Tibial artery (tissue), 4 donors: ENCODE measurements at regions of chr11 and their contacts with region 1.

Region 1: GRCh38 chr11:76656571-76657081 is 13.9 kb downstream of the LRRC32 start:
- DNase-seq: peak; percentile 24 to 75
- H3K4me3 ChIP-seq: no peak overlapping the region
- H3K27ac ChIP-seq: peak overlapping the region; percentile 80 to 91
- H3K4me1 ChIP-seq: peaks cover 0 to 74% (median 65%) of the 10 kb centered on the region in 4 donors
- H3K27me3 ChIP-seq: no peaks in the 10 kb centered on the region
- CTCF ChIP-seq: no peak

Region 2: DNA sequence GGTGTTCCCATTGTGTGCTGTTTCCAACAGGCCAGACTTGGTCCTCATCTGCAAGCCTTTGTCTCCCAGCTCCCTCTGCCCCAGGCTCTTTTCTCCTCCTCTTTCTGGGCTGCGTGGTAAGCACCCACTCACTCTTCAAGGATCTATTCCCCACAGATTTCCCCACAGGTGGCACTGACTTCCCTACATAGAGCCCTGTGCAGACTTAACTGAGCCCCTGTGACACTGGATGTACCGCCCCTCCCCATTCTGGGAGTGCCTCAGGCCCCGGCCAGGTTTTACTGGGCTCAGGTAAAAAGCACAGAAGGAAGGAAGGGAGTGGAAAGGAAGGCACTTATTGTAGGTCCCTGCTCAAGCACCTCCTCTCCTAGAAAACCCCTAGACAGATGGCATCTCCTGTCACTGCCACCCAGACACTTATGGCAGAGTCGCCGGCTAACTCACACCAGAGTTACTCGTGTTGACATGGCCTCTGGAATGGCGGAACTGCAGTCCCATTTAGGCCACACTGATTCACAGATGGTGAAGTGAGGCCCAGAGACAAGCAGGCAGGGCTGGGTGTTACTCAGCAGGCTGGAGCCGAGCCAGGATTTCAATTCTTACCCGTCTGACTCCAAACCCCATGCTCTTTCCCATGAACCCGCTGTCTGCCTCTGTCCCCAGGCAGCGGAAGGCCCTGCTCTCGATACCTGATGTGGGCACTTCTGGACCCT is 33.3 kb before region 1 on chr11:
- intact Hi-C with region 1: loop called (anchors 5 kb)
- DNase-seq: no peak
- H3K4me3 ChIP-seq: no peak overlapping the region
- H3K27ac ChIP-seq: peak overlapping the region in 1 of 2 donors; percentile 27
- H3K4me1 ChIP-seq: peaks cover 0 to 40% (median 23%) of the 10 kb centered on the region in 4 donors
- H3K27me3 ChIP-seq: no peaks in the 10 kb centered on the region
- CTCF ChIP-seq: no peak